Activated T-helper 1 cell treated with anti-CD3 and anti-CD28 coated beads, Interleukin-12 subunit alpha, Interleukin-12 subunit beta, Interleukin-2, Interleukin-4 antibody, amounts not matched to agents 30 ng/mL and 10 ng/mL and 1 ng/mL, durations not matched to agents 14 hours and 24 hours and 36 hours (primary cell): ENCODE measurements at regions of chr6 and their contacts with region 1.

Region 1: GRCh38 chr6:30066577-30067459 is at the start of gene PPP1R11:
- DNase-seq: peak; percentile 99
- H3K4me3 Mint-ChIP-seq: peak within 1 kb of the TSS; percentile 97
- H3K27ac Mint-ChIP-seq: peak within 1 kb of the TSS; percentile 99
- H3K4me1 Mint-ChIP-seq: peaks cover 50% of the 10 kb centered on the region
- H3K27me3 Mint-ChIP-seq: peaks cover 11% of the 10 kb centered on the region
- total RNA-seq, gene PPP1R11: 69.8 and 71.0 TPM in 2 replicates

Region 2: GRCh38 chr6:28863604-28864320 is 1203.1 kb before region 1 on chr6:
- intact Hi-C with region 1: loop called (anchors 10 kb)
- DNase-seq: peak; percentile 80
- H3K4me3 Mint-ChIP-seq: peak overlapping the region; percentile 94
- H3K27ac Mint-ChIP-seq: peak overlapping the region; percentile 93
- H3K4me1 Mint-ChIP-seq: peaks cover 47% of the 10 kb centered on the region
- H3K27me3 Mint-ChIP-seq: peaks cover 17% of the 10 kb centered on the region

Region 3: DNA sequence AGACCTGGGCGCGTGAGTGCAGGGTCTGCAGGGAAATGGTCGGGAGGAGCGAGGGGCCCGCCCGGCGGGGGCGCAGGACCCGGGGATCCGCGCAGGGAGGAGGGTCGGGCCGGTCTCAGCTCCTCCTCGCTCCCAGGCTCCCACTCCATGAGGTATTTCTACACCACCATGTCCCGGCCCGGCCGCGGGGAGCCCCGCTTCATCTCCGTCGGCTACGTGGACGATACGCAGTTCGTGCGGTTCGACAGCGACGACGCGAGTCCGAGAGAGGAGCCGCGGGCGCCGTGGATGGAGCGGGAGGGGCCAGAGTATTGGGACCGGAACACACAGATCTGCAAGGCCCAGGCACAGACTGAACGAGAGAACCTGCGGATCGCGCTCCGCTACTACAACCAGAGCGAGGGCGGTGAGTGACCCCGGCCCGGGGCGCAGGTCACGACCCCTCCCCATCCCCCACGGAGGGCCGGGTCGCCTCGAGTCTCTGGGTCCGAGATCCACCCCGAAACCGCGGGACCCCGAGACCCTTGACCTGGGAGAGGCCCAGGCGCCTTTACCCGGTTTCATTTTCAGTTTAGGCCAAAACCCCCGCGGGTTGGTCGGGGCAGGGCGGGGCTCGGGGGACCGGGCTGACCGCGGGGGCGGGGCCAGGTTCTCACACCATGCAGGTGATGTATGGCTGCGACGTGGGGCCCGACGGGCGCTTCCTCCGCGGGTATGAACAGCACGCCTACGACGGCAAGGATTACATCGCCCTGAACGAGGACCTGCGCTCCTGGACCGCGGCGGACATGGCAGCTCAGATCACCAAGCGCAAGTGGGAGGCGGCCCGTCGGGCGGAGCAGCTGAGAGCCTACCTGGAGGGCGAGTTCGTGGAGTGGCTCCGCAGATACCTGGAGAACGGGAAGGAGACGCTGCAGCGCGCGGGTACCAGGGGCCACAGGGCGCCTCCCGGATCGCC is 178.7 kb before region 1 on chr6:
- intact Hi-C with region 1: loop called (anchors 2 kb)
- DNase-seq: peak; percentile 83
- H3K4me3 Mint-ChIP-seq: peak overlapping the region; percentile 87
- H3K27ac Mint-ChIP-seq: peak overlapping the region; percentile 93
- H3K4me1 Mint-ChIP-seq: peaks cover 17% of the 10 kb centered on the region
- H3K27me3 Mint-ChIP-seq: peaks cover 9% of the 10 kb centered on the region

Region 4: GRCh38 chr6:29964887-29965562 is 101.8 kb before region 1 on chr6:
- intact Hi-C with region 1: loop called (anchors 2 kb)
- DNase-seq: peak; percentile 76
- H3K4me3 Mint-ChIP-seq: peak overlapping the region; percentile 92
- H3K27ac Mint-ChIP-seq: peak overlapping the region; percentile 97
- H3K4me1 Mint-ChIP-seq: peaks cover 40% of the 10 kb centered on the region
- H3K27me3 Mint-ChIP-seq: peaks cover 1% of the 10 kb centered on the region

Region 5: DNA sequence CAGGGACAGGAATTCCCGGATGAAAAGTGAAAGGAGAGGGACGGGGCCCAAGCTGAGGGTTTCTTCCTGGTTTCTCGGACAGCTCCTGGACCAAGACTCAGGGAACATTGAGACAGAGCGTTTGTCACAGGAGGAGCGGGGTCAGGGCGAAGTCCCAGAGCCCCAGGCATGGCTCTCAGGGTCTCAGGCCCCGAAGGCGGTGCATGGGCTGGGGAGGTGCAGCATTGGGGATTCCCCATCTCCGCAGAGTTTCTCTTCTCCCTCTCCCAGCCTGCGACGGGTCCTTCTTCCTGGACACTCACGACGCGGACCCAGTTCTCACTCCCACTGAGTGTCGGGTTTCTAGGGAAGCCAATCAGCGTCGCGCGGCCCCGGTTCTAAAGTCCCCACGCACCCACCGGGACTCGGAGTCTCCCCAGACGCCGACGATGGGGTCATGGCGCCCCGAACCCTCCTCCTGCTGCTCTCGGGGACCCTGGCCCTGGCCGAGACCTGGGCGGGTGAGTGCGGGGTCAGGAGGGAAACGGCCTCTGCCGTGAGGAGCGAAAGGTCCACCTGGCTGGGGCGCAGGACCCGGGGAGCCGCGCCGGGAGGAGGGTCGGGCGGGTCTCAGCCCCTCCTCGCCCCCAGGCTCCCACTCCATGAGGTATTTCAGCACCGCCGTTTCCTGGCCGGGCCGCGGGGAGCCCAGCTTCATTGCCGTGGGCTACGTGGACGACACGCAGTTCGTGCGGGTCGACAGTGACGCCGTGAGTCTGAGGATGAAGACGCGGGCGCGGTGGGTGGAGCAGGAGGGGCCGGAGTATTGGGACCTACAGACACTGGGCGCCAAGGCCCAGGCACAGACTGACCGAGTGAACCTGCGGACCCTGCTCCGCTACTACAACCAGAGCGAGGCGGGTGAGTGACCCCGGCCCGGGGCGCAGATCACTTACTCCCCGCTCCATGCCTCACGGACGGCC is 60.4 kb before region 1 on chr6:
- intact Hi-C with region 1: no loop called
- DNase-seq: no peak
- H3K4me3 Mint-ChIP-seq: peak overlapping the region; percentile 70
- H3K27ac Mint-ChIP-seq: no peak overlapping the region
- H3K4me1 Mint-ChIP-seq: peaks cover 14% of the 10 kb centered on the region
- H3K27me3 Mint-ChIP-seq: peaks cover 45% of the 10 kb centered on the region

Region 6: DNA sequence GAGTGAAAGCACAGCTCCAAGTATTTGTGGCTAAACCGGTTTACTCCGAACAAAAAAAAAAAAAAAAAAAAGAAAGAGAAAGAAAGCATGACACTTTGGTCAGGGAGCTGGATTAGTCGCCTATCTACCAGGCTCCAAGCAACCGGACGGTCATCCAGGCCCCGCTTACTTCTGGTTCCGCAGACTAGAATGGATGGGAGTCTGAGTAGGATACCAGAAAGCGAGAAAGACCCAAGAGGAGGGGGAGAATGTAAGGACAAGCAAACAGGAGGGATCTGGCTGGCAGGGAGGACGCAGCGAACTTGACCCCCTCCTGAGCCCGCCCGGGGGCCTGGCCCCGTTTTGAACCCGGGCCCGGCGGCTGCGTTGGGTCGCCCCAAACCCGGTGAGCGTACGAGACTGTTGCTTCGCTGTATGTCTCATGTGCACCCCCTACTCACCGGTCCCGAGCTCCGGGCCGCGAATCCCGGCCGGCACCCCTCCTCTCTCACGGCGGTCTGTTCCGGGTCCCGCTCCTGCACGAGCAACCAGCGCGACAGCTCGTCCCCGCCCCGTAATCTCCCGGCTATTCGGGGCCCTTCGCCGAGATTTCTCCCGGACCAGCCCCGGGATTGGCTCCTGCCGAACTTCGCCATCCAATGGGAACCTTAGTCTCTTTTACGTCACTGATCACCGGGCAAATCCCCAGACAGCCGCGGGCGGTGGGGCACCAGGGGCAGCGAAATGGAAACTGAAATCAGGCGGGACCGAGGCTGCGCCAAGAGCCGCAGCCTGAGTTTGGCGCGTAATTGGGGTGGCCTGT is 146.2 kb after region 1 on chr6 and contains the start of gene TRIM26:
- intact Hi-C with region 1: loop called (anchors 1 kb)
- DNase-seq: peak; percentile 98
- H3K4me3 Mint-ChIP-seq: peak within 1 kb of the TSS; percentile 88
- H3K27ac Mint-ChIP-seq: peak within 1 kb of the TSS; percentile 97
- H3K4me1 Mint-ChIP-seq: peaks cover 57% of the 10 kb centered on the region
- H3K27me3 Mint-ChIP-seq: no peaks in the 10 kb centered on the region
- total RNA-seq, gene TRIM26: 61.6 and 64.7 TPM in 2 replicates

Region 7: DNA sequence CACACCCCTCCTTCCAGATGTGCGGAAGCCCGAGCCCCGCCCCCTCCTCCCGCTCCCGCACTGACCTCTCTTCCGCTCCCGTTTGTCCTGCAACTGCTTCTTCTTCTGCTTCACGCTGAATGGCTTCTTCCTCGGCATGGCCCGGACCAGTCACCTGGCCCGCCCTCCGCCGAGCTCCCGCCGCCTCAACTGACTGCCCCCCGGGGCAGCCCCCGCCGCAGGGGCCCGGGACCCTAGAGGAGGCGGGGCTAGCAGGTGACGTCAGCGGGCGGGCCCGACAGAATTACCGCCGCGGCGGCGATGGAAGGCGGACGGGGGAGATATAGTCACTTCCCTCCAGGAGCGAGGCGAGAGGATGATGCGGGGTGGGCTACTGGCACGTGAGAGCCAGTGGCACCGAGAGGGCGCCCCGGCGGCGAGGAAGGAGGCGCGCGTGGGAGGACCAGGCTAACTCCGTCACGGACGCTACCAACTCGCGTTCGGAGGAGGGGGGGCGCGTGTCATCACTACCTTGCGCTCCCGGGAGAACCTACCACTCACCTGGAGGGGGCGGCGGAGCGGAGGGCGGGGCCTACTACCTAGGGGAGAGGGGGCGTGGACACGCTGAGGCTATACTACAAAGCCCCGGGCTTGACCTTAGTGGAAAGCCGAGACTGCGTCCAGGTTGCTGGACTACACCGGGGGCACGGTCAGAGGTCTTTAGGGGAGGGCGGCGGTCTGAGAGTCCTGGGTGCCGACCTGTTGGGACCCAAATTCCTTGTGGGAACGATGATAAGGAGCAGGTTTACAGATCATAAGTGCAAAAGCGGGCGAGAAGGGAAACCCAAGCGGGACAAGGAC is 489.5 kb after region 1 on chr6 and contains the start of gene GNL1:
- intact Hi-C with region 1: loop called (anchors 2 kb)
- DNase-seq: peak; percentile 96
- H3K4me3 Mint-ChIP-seq: peak within 1 kb of the TSS; percentile 96
- H3K27ac Mint-ChIP-seq: peak within 1 kb of the TSS; percentile 99
- H3K4me1 Mint-ChIP-seq: peaks cover 36% of the 10 kb centered on the region
- H3K27me3 Mint-ChIP-seq: no peaks in the 10 kb centered on the region
- total RNA-seq, gene GNL1: 86.3 and 92.4 TPM in 2 replicates